PC-9 (cell line): ENCODE measurements at regions of chr1 and their contacts with region 1.

Region 1: GRCh38 chr1:179365320-179366092 is at the start of gene AXDND1:
- DNase-seq: peak; percentile 69 to 76
- H3K4me3 ChIP-seq: peak within 1 kb of the TSS; percentile 80
- H3K27ac ChIP-seq: peak within 1 kb of the TSS; percentile 79
- H3K4me1 ChIP-seq: peaks cover 4% of the 10 kb centered on the region; the same call in 1 of the 2 replicates
- H3K27me3 ChIP-seq: no peaks in the 10 kb centered on the region
- CTCF ChIP-seq: peak; percentile 32; the same call in 1 of the 2 replicates
- total RNA-seq, gene AXDND1: 1.8 and 3.4 TPM in 2 replicates

Region 2: GRCh38 chr1:178310685-178311105 is 1054.8 kb before region 1 on chr1:
- CTCF ChIA-PET with region 1: no interaction called
- POLR2A ChIA-PET with region 1: no interaction called
- intact Hi-C with region 1: loop called (anchors 5 kb)
- DNase-seq: peak; percentile 15 to 86
- H3K4me3 ChIP-seq: no peak overlapping the region
- H3K27ac ChIP-seq: no peak overlapping the region
- H3K4me1 ChIP-seq: peaks cover 34% of the 10 kb centered on the region
- H3K27me3 ChIP-seq: no peaks in the 10 kb centered on the region
- CTCF ChIP-seq: peak; percentile 88

Region 3: DNA sequence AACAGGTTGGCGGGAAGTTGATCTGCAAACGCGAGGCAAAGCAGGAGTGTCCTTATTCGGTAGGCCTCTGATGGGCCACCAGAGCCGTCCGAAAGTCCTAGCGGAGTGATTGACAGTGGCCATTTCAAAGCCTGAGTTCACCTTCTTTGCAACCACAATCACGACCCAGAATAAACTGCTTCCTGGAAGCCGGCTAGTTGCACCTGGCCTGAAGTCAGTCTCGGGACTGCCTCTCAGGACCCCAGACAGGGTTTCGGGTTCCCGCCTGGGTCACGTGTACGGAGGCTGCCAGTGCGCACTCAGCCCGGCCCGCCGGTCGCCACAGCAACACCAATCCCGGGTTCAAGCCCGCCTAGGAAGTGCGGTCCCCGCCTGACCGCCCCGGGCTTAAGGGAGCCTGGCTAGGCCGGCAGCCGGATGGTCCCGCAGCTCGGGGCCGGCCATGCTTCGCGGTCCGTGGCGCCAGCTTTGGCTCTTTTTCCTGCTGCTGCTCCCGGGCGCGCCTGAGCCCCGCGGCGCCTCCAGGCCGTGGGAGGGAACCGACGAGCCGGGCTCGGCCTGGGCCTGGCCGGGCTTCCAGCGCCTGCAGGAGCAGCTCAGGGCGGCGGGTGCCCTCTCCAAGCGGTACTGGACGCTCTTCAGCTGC is 283.7 kb before region 1 on chr1 and contains the start of gene TOR3A:
- CTCF ChIA-PET with region 1: no interaction called
- POLR2A ChIA-PET with region 1: interaction called, 4 read pairs
- intact Hi-C with region 1: loop called (anchors 1 kb)
- DNase-seq: peak; percentile 87 to 96
- H3K4me3 ChIP-seq: peak within 1 kb of the TSS; percentile 79
- H3K27ac ChIP-seq: peak within 1 kb of the TSS; percentile 76
- H3K4me1 ChIP-seq: peaks cover 28% of the 10 kb centered on the region
- H3K27me3 ChIP-seq: no peaks in the 10 kb centered on the region
- CTCF ChIP-seq: no peak
- total RNA-seq, gene TOR3A: 31.6 and 35.6 TPM in 2 replicates

Region 4: DNA sequence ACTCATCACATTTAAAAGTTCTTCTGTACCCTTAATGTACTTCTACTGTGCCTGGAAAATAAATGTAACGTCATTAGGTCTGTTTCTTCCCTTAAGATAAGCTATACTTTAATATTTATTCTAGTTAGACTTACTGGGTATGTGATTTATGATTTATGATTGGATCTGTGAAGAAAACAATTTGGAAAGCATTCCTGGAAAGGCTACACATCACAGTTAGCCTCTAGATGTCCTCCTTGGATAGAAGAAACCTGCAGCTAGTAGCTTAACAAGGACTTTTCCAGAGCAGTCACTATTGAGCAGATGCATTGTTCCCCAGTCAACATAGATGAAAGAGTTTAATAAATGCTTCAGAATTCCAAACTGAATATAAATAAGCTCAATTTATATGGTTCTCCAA is 113.8 kb before region 1 on chr1:
- CTCF ChIA-PET with region 1: no interaction called
- POLR2A ChIA-PET with region 1: interaction called, 3 read pairs
- intact Hi-C with region 1: loop called (anchors 5 kb)
- DNase-seq: no peak
- H3K4me3 ChIP-seq: no peak overlapping the region
- H3K27ac ChIP-seq: no peak overlapping the region
- H3K4me1 ChIP-seq: no peaks in the 10 kb centered on the region
- H3K27me3 ChIP-seq: no peaks in the 10 kb centered on the region
- CTCF ChIP-seq: peak; percentile 62